Natural killer cell (primary cell): ENCODE measurements at regions of chr1 and their contacts with region 1.

Region 1: DNA sequence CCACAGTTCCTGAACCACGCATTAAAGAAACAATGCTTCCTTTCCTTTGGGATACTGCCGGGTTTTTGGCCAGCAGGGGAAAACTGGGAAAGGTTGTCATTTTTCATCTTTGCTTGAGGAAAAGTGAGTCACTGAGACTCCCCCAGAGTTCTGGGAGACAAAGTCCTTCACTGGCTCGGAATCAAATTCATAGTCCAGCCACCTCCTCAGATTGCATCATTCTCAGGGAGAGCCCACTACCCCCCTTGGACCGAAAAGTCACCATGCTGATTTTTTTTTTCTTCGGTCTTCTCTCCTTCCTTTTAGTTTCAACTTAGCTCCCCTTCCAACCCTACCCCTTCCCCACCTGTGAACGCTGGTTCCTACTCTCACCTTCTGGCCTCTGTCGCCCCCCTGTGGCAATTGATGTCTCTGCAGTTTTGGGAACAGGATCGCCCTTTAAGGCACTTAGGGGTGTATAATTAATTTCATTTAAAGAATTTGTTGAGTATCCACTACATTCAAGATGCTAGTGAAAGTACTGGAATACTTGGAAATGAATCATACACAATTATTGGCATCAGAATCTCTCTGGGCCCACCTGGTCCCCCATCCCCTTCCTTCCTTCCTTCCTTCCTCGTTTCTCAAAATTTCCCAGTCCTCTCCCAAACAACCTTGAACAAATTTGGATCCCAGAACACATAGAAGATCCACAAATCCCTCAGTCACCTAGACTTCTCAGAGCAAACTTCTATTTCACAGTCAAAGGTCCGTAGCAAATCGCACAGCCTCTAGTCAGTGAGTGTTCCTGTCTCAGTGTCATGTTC is 6.9 kb downstream of the ACKR1 start:
- DNase-seq: peak; percentile 22 to 66
- ATAC-seq: peak in 2 of 3 donors; percentile 55 to 62
- H3K4me3 ChIP-seq: no peak overlapping the region
- H3K4me3 Mint-ChIP-seq: no peak overlapping the region
- H3K27ac ChIP-seq: no peak overlapping the region
- H3K27ac Mint-ChIP-seq: no peak overlapping the region
- H3K4me1 ChIP-seq: no peaks in the 10 kb centered on the region
- H3K4me1 Mint-ChIP-seq: no peaks in the 10 kb centered on the region
- H3K27me3 ChIP-seq: peaks cover 4% of the 10 kb centered on the region
- H3K27me3 Mint-ChIP-seq: peaks cover 45 to 71% of the 10 kb centered on the region in 2 donors
- CTCF ChIP-seq: peak; percentile 83

Region 2: GRCh38 chr1:159132271-159132881 is 79.2 kb before region 1 on chr1:
- intact Hi-C with region 1: loop called (anchors 2 kb)
- DNase-seq: peak; percentile 54 to 74
- ATAC-seq: peak; percentile 62 to 67 (median 63)
- H3K4me3 ChIP-seq: no peak overlapping the region
- H3K4me3 Mint-ChIP-seq: no peak overlapping the region
- H3K27ac ChIP-seq: no peak overlapping the region
- H3K27ac Mint-ChIP-seq: no peak overlapping the region
- H3K4me1 ChIP-seq: no peaks in the 10 kb centered on the region
- H3K4me1 Mint-ChIP-seq: no peaks in the 10 kb centered on the region
- H3K27me3 ChIP-seq: peaks cover 2% of the 10 kb centered on the region
- H3K27me3 Mint-ChIP-seq: peaks cover 0 to 2% of the 10 kb centered on the region in 2 donors
- CTCF ChIP-seq: peak; percentile 83